ENCODE measurements at regions of chr15 and their contacts with region 1.

Region 1: GRCh38 chr15:93087825-93088199 is 1.2 kb downstream of the RGMA start:
- DNase-seq: peak; percentile 81
- H3K4me3 ChIP-seq: peak overlapping the region; percentile 40 to 60
- H3K27ac ChIP-seq: no peak overlapping the region
- H3K4me1 ChIP-seq: peaks cover 0 to 8% of the 10 kb centered on the region in 2 experiments; a peak in 1 of 4 replicates
- H3K27me3 ChIP-seq: peaks cover 45% of the 10 kb centered on the region; the same call in 1 of the 2 replicates
- CTCF ChIP-seq: peak; percentile 92
- EP300 ChIP-seq: no peak
- RAD21 ChIP-seq: peak; percentile 85

Region 2: DNA sequence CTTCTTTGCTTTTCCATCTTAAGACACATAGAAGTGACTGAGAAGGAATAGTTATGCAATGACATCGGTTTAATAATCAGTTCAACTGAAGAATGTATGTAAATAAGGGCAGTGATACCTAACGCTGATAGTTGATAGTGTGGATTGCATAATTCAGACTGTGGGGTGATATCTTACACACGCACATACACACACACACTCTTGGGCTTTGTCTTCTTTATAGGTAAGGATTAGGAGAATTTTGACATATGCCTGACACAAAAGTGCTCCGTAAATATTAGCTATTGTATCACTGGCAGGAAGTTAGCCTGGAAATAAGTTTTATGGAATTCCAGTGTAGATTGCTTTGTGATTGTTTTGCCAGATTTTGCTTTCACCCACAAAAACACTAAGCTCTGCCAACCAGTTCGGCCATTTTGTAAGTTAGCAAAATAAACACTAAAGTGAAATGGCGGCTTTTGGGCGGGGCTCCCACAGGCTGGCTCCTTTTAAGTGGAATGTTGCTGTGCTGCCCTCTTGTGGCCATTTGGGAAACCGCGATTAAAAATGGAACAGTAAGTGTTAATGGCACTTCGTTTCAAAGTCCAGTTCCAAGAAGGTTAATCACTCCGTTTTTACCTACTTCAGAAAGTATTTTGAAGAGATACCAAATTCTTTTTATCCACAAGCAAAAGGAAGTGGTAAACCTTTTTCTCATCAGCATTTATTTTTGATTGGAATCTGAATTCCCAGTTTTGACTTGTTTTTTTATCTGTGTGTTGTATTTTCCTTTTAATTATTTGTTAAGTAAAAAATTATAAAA is 170.0 kb before region 1 on chr15:
- CTCF ChIA-PET with region 1: no interaction called
- POLR2A ChIA-PET with region 1: no interaction called
- DNase-seq: peak; percentile 76
- H3K4me3 ChIP-seq: no peak overlapping the region; a peak in 1 of 4 replicates
- H3K27ac ChIP-seq: peak overlapping the region; percentile 88 to 90
- H3K4me1 ChIP-seq: peaks cover 9 to 41% of the 10 kb centered on the region in 2 experiments
- H3K27me3 ChIP-seq: no peaks in the 10 kb centered on the region
- CTCF ChIP-seq: peak; percentile 94
- EP300 ChIP-seq: 0 out of 4 replicates have a peak, but pooled peaks of 1 of the 2 experiments have one; percentile 1
- RAD21 ChIP-seq: peak; percentile 84

Region 3: GRCh38 chr15:93030430-93031105 is 57.2 kb before region 1 on chr15:
- CTCF ChIA-PET with region 1: interaction called, 18 read pairs
- POLR2A ChIA-PET with region 1: no interaction called
- DNase-seq: peak; percentile 91
- H3K4me3 ChIP-seq: peak overlapping the region in 1 of 2 experiments; percentile 1; a peak in 1 of 4 replicates
- H3K27ac ChIP-seq: no peak overlapping the region; a peak in 1 of 4 replicates
- H3K4me1 ChIP-seq: peaks cover 19 to 20% of the 10 kb centered on the region in 2 experiments; a peak in 3 of 4 replicates
- H3K27me3 ChIP-seq: no peaks in the 10 kb centered on the region
- CTCF ChIP-seq: peak; percentile 84
- EP300 ChIP-seq: no peak
- RAD21 ChIP-seq: peak; percentile 91

Region 4: GRCh38 chr15:93035953-93036800 is 51.6 kb before region 1 on chr15:
- CTCF ChIA-PET with region 1: interaction called, 18 read pairs
- POLR2A ChIA-PET with region 1: no interaction called
- DNase-seq: peak; percentile 69
- H3K4me3 ChIP-seq: no peak overlapping the region
- H3K27ac ChIP-seq: no peak overlapping the region
- H3K4me1 ChIP-seq: peaks cover 0 to 8% of the 10 kb centered on the region in 2 experiments; a peak in 1 of 4 replicates
- H3K27me3 ChIP-seq: no peaks in the 10 kb centered on the region
- CTCF ChIP-seq: peak; percentile 54
- EP300 ChIP-seq: no peak
- RAD21 ChIP-seq: peak; percentile 47

Region 5: GRCh38 chr15:93060336-93061263 is 27.2 kb before region 1 on chr15:
- CTCF ChIA-PET with region 1: interaction called, 11 read pairs
- POLR2A ChIA-PET with region 1: no interaction called
- DNase-seq: no peak
- H3K4me3 ChIP-seq: no peak overlapping the region
- H3K27ac ChIP-seq: no peak overlapping the region
- H3K4me1 ChIP-seq: peaks cover 0 to 3% of the 10 kb centered on the region in 2 experiments; a peak in 2 of 4 replicates
- H3K27me3 ChIP-seq: no peaks in the 10 kb centered on the region
- CTCF ChIP-seq: no peak
- EP300 ChIP-seq: no peak
- RAD21 ChIP-seq: no peak

Region 6: GRCh38 chr15:93072411-93073394 is 15.1 kb before region 1 on chr15:
- CTCF ChIA-PET with region 1: interaction called, 38 read pairs
- POLR2A ChIA-PET with region 1: interaction called, 3 read pairs
- DNase-seq: peak; percentile 95
- H3K4me3 ChIP-seq: peak overlapping the region; percentile 70 to 87
- H3K27ac ChIP-seq: peak overlapping the region in 1 of 2 experiments; percentile 30; a peak in 1 of 4 replicates
- H3K4me1 ChIP-seq: peaks cover 5 to 8% of the 10 kb centered on the region in 2 experiments
- H3K27me3 ChIP-seq: no peaks in the 10 kb centered on the region
- CTCF ChIP-seq: no peak
- EP300 ChIP-seq: no peak
- RAD21 ChIP-seq: no peak

Region 7: DNA sequence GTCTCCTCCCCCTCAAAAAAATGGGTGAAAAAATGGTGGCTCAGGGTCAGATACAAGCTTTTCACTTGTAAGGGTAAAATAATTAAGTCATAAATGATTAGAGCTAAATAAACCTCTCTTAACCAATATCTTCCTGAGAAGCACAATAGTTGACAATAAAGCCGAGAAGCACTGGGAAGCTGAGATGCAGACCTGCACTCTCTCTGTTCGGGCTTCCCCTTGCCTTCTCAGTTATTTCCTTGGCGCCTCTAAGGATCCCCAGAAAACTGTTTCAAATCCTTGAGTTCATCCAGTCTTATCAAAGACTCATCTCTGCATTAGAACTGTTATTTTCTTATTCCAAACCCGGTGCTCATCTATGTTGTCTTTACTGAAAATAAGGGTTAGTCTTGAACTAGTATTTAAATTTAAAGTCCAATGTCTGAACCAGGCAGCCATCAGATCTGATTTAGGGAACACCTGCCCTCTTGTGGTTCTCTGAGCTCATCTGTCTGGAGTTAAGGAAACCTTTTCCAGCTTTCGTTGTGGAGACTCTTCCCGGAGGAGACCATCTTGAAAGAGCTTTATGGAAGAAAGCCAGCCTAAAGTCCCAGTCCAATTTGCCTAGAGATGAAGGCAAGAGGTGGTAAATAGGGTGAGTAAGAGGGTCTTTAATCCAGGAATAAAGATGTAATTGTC is 887.1 kb after region 1 on chr15:
- CTCF ChIA-PET with region 1: interaction called, 30 read pairs
- POLR2A ChIA-PET with region 1: no interaction called
- DNase-seq: peak; percentile 16
- H3K4me3 ChIP-seq: no peak overlapping the region
- H3K27ac ChIP-seq: no peak overlapping the region
- H3K4me1 ChIP-seq: no peaks in the 10 kb centered on the region
- H3K27me3 ChIP-seq: no peaks in the 10 kb centered on the region
- CTCF ChIP-seq: peak; percentile 51
- EP300 ChIP-seq: no peak
- RAD21 ChIP-seq: peak; percentile 77

Region 8: GRCh38 chr15:93982226-93982727 is 894.5 kb after region 1 on chr15:
- CTCF ChIA-PET with region 1: interaction called, 10 read pairs
- POLR2A ChIA-PET with region 1: no interaction called
- DNase-seq: peak; percentile 17
- H3K4me3 ChIP-seq: no peak overlapping the region
- H3K27ac ChIP-seq: peak overlapping the region in 1 of 2 experiments; percentile 88; a peak in 2 of 4 replicates
- H3K4me1 ChIP-seq: peaks cover 0 to 20% of the 10 kb centered on the region in 2 experiments; a peak in 2 of 4 replicates
- H3K27me3 ChIP-seq: no peaks in the 10 kb centered on the region
- CTCF ChIP-seq: no peak
- EP300 ChIP-seq: peak in 1 of 2 experiments; percentile 48; a peak in 1 of 4 replicates
- RAD21 ChIP-seq: no peak; the same call in 1 of the 2 replicates

Measured in SK-N-SH (cell line).